ENCODE measurements at regions of chr4 and their contacts with region 1.

Region 1: DNA sequence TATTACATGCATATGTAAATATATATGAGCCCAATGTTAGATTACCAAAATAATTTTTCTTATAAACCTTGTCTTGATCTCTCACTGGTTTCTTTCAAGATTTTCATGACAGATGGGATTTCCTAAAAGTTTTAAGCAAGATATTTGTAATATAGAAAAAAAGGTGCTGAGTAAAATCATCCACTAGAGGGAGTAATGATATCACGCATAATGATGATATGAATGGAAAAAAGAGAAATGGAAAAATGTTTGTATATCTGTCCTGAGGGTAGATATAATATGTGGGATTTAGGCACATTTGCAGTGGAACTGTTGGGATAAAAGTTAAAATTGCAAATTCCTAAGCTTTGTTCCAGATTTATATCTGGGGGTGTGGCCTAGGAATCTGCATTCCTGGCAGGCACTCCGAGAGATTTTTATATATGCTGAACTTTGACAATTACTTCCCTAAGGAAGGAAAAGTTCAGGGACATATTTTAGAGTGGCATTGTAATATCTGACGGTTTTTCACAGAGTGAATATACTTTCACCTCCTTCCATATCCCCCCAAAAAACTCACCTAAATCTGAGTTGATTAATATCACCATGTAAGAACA is 60.5 kb downstream of the TMA16 start:
- DNase-seq: no peak
- H3K4me3 ChIP-seq: no peak overlapping the region
- H3K27ac ChIP-seq: no peak overlapping the region
- H3K27me3 ChIP-seq: no peaks in the 10 kb centered on the region
- CTCF ChIP-seq: peak; percentile 71

Region 2: DNA sequence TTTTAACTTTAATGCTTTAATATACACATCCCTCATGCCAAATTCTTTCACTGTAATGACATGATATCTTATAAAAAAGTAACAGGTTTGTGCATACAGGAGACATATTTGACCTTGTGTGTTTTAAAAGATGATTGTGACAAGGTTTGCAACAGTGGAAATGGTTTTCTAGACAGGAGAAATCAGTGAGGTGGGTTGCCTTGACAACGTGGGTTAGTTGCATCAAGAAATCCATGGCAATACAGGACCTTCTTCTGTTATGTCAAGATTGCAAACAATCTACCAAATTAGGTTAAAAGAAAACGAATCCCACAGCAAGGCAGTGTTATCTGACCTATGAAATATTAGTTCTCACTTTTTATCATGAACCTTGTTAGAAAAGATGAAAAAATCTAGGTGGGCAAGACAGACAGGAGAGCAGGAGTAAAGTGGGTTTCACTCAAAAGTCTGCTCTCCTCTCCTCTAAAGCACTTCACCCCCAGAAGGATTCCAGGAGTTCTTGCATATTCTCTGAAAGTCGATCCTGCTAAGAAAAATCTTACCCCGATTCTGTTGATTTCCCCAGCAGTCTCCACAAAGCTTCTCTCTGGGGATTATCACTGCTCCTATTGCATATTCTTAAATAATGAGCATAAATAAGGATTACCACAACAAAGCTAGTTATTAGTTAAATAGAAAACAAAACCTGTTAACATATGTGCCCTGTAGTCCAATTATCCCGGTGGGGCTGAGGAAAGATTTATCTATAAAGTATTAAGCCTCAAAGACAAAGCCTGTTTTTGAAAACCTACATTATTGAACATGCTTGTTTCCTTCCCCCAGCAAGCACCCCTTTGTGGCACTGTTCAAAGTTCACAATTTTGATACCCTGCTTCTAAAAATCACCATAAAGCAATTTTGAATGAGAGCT is 10.5 kb after region 1 on chr4:
- CTCF ChIA-PET with region 1: interaction called, 20 read pairs
- POLR2A ChIA-PET with region 1: no interaction called
- DNase-seq: no peak
- H3K4me3 ChIP-seq: no peak overlapping the region
- H3K27ac ChIP-seq: no peak overlapping the region
- H3K27me3 ChIP-seq: no peaks in the 10 kb centered on the region
- CTCF ChIP-seq: no peak

Region 3: GRCh38 chr4:163694385-163694784 is 139.4 kb after region 1 on chr4:
- CTCF ChIA-PET with region 1: interaction called, 24 read pairs
- POLR2A ChIA-PET with region 1: no interaction called
- DNase-seq: peak; percentile 21
- H3K4me3 ChIP-seq: no peak overlapping the region
- H3K27ac ChIP-seq: peak overlapping the region; percentile 82
- H3K27me3 ChIP-seq: no peaks in the 10 kb centered on the region
- CTCF ChIP-seq: 0 out of 2 replicates have a peak, but pooled peaks have one; percentile 13

Region 4: DNA sequence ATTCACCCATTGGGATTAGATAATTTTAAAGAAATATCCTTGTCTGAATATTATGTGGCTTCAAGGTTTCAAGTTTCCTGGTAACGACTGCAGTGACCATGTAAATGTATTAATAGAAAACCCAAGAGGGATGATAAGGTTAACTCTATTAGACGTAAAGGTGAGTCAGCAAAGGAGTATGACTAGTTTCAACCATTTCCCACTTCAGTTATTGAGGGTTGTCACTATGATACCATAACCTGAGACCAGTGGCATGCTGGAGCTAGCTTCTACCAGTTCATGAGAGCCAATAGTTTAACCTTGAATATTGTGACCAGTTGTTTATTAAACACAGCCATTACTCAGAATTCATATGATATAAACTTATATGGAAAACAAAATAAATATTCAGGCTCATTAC is 209.6 kb after region 1 on chr4:
- CTCF ChIA-PET with region 1: interaction called, 361 read pairs
- POLR2A ChIA-PET with region 1: no interaction called
- DNase-seq: no peak
- H3K4me3 ChIP-seq: no peak overlapping the region
- H3K27ac ChIP-seq: no peak overlapping the region
- H3K27me3 ChIP-seq: no peaks in the 10 kb centered on the region
- CTCF ChIP-seq: no peak

Region 5: GRCh38 chr4:164748375-164748774 is 1193.4 kb after region 1 on chr4:
- CTCF ChIA-PET with region 1: interaction called, 13 read pairs
- POLR2A ChIA-PET with region 1: no interaction called
- DNase-seq: no peak
- H3K4me3 ChIP-seq: no peak overlapping the region
- H3K27ac ChIP-seq: no peak overlapping the region
- H3K27me3 ChIP-seq: no peaks in the 10 kb centered on the region
- CTCF ChIP-seq: peak; percentile 40

Measured in AG04450 (cell line).